ENCODE measurements at regions of chr1 and their contacts with region 1.

Region 1: GRCh38 chr1:211648980-211649934 is 26.2 kb downstream of the NEK2 start:
- DNase-seq: peak; percentile 68
- ATAC-seq: peak; percentile 93
- H3K4me3 ChIP-seq: no peak overlapping the region
- H3K27ac ChIP-seq: no peak overlapping the region
- H3K4me1 ChIP-seq: peaks cover 66% of the 10 kb centered on the region
- H3K27me3 ChIP-seq: no peaks in the 10 kb centered on the region; a peak in 1 of 5 replicates
- CTCF ChIP-seq: peak; percentile 70
- EP300 ChIP-seq: no peak
- POLR2A ChIP-seq: no peak
- RAD21 ChIP-seq: peak; percentile 81

Region 2: GRCh38 chr1:211257826-211258225 is 391.4 kb before region 1 on chr1:
- CTCF ChIA-PET with region 1: no interaction called
- POLR2A ChIA-PET with region 1: no interaction called
- in situ Hi-C with region 1: no loop called
- intact Hi-C with region 1: no loop called
- DNase-seq: no peak
- ATAC-seq: no peak
- H3K4me3 ChIP-seq: peak overlapping the region; percentile 55 to 97 (median 77)
- H3K27ac ChIP-seq: peak overlapping the region; percentile 98
- H3K4me1 ChIP-seq: peaks cover 26% of the 10 kb centered on the region; the same call in 1 of the 2 replicates
- H3K27me3 ChIP-seq: no peaks in the 10 kb centered on the region; a peak in 1 of 5 replicates
- CTCF ChIP-seq: no peak
- EP300 ChIP-seq: no peak
- POLR2A ChIP-seq: no peak
- RAD21 ChIP-seq: no peak

Region 3: DNA sequence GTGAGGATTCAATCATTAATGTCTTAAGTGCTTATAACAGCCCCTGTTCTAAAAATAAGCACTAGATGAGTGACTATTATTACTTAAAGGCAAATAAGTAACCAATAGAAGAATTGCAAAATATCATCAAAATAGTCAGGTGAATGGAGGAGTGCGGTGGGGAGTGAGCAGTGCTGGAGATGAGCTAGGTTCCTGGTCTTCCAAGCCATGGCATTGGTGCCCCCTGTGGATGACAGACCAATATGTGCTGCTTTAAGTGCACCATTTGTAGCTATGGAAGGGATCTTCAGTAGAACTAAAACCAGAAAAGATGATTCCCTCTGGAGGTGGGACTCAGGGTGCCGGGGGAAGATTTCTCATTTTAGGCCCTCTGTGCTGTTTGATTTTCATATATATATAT is 24.2 kb before region 1 on chr1:
- CTCF ChIA-PET with region 1: no interaction called
- POLR2A ChIA-PET with region 1: interaction called, 5 read pairs
- in situ Hi-C with region 1: no loop called
- intact Hi-C with region 1: loop called (anchors 1 kb)
- DNase-seq: peak; percentile 76
- ATAC-seq: peak; percentile 96
- H3K4me3 ChIP-seq: no peak overlapping the region
- H3K27ac ChIP-seq: no peak overlapping the region
- H3K4me1 ChIP-seq: peaks cover 40% of the 10 kb centered on the region
- H3K27me3 ChIP-seq: peaks cover 0 to 2% of the 10 kb centered on the region in 2 experiments; a peak in 1 of 5 replicates
- CTCF ChIP-seq: peak; percentile 85
- EP300 ChIP-seq: peak in 1 of 2 experiments; percentile 12; a peak in 1 of 4 replicates
- POLR2A ChIP-seq: no peak
- RAD21 ChIP-seq: peak; percentile 68; the same call in 1 of the 2 replicates

Measured in HepG2 (cell line).